BJ (cell line): ENCODE measurements at regions of chr1 and their contacts with region 1.

Region 1: GRCh38 chr1:203172128-203173010 is 3.3 kb downstream of the MYBPH start:
- DNase-seq: no peak
- H3K4me3 ChIP-seq: no peak overlapping the region
- H3K27me3 ChIP-seq: no peaks in the 10 kb centered on the region
- CTCF ChIP-seq: peak; percentile 98

Region 2: DNA sequence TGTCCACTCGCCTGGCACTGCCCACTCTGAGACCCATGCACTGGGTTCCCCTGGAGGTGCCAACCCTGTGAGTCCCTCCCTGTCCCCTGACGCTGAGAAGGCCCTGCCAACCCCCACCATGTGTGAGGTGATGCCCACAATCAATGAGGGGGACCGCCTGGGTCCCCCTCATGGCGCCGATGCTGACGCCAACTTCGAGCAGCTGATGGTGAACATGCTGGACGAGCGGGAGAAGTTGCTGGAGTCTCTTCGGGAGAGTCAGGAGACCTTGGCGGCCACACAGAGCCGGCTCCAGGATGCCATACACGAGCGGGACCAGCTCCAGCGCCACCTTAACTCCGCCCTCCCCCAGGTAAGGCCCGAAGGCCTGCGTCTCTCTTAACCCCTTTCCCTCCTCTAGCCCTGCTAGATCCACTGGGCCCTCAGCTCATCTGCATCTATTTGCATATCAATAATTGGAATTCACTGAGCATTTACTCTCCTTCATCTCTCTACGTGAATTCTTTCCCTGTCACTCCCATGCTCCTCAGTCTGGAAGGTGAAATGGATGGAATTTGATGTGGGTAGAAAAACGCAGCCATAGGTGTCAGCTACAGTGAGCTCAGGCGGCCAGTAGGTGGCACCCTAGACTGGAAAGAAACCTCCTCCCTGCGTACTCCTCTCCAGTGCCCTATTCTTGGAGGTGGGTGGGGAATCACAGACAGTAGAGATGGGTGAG is 133.3 kb before region 1 on chr1:
- CTCF ChIA-PET with region 1: interaction called, 98 read pairs
- POLR2A ChIA-PET with region 1: no interaction called
- DNase-seq: no peak
- H3K4me3 ChIP-seq: no peak overlapping the region
- H3K27me3 ChIP-seq: no peaks in the 10 kb centered on the region
- CTCF ChIP-seq: peak; percentile 91

Region 3: GRCh38 chr1:203127666-203128430 is 44.5 kb before region 1 on chr1 and contains the start of gene ADORA1:
- CTCF ChIA-PET with region 1: interaction called, 183 read pairs
- POLR2A ChIA-PET with region 1: interaction called, 13 read pairs
- DNase-seq: no peak
- H3K4me3 ChIP-seq: peak within 1 kb of the TSS; percentile 41
- H3K27me3 ChIP-seq: peaks cover 8% of the 10 kb centered on the region
- CTCF ChIP-seq: peak; percentile 32
- polyA plus RNA-seq, gene ADORA1: 2.1 and 2.4 TPM in 2 replicates

Region 4: GRCh38 chr1:203140743-203141520 is 31.4 kb before region 1 on chr1:
- CTCF ChIA-PET with region 1: interaction called, 12 read pairs
- POLR2A ChIA-PET with region 1: no interaction called
- DNase-seq: no peak
- H3K4me3 ChIP-seq: no peak overlapping the region
- H3K27me3 ChIP-seq: no peaks in the 10 kb centered on the region
- CTCF ChIP-seq: no peak

Region 5: GRCh38 chr1:203158960-203159665 is 13.3 kb before region 1 on chr1:
- CTCF ChIA-PET with region 1: interaction called, 36 read pairs
- POLR2A ChIA-PET with region 1: no interaction called
- DNase-seq: no peak
- H3K4me3 ChIP-seq: no peak overlapping the region
- H3K27me3 ChIP-seq: no peaks in the 10 kb centered on the region; the same call in 1 of the 2 replicates
- CTCF ChIP-seq: no peak

Region 6: GRCh38 chr1:203197625-203198024 is 25.3 kb after region 1 on chr1:
- CTCF ChIA-PET with region 1: interaction called, 17 read pairs
- POLR2A ChIA-PET with region 1: no interaction called
- DNase-seq: no peak
- H3K4me3 ChIP-seq: no peak overlapping the region
- H3K27me3 ChIP-seq: no peaks in the 10 kb centered on the region
- CTCF ChIP-seq: no peak